ENCODE measurements at regions of chr19 and their contacts with region 1.

Region 1: GRCh38 chr19:43474986-43475705 is 9.7 kb upstream of the LYPD3 start:
- DNase-seq: peak; percentile 88
- H3K4me3 ChIP-seq: peak overlapping the region; percentile 29
- H3K27ac ChIP-seq: peak overlapping the region; percentile 70
- H3K27me3 ChIP-seq: no peaks in the 10 kb centered on the region
- CTCF ChIP-seq: no peak

Region 2: DNA sequence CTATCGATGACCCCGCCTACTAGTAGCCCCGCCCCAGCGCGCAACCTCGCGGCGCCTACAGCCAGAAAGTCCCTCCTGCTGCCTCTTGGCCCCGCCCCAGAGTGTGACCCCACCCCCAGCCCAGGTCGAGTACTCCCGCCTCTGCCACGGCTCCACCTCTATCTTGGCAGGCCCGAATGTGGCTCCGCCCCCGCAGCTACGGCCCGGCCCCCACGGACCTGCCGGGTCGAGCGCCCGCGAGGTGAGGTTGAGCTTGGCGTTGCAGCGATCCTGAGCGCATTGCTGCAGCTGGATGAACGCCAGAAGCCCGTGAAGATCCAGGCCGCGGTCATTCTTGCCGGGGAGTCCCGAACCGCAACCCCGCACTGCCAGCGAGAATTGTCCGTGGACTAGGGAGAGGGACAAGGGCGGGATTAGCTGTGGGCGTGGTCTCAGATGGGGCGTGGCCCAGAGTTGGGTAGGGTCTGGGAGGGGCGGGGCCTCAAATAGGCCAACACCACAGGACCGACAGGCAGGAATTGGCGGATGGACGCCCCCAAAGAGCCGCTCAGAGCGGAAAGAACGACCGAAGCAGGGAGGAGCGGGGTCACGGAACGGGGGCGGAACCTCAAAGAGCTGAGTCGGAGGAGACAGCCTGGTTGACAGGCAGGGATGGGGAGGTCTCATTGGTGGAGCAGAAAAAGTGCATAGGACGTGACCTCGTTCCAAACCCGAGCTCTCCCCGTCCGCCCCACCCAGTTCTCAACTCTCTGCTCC is 11.6 kb before region 1 on chr19:
- CTCF ChIA-PET with region 1: no interaction called
- POLR2A ChIA-PET with region 1: interaction called, 12 read pairs
- DNase-seq: peak; percentile 62
- H3K4me3 ChIP-seq: peak overlapping the region; percentile 79
- H3K27ac ChIP-seq: peak overlapping the region; percentile 47
- H3K27me3 ChIP-seq: peaks cover 7% of the 10 kb centered on the region
- CTCF ChIP-seq: no peak